Endothelial cell of umbilical vein (primary cell): ENCODE measurements at regions of chr1 and their contacts with region 1.

Region 1: DNA sequence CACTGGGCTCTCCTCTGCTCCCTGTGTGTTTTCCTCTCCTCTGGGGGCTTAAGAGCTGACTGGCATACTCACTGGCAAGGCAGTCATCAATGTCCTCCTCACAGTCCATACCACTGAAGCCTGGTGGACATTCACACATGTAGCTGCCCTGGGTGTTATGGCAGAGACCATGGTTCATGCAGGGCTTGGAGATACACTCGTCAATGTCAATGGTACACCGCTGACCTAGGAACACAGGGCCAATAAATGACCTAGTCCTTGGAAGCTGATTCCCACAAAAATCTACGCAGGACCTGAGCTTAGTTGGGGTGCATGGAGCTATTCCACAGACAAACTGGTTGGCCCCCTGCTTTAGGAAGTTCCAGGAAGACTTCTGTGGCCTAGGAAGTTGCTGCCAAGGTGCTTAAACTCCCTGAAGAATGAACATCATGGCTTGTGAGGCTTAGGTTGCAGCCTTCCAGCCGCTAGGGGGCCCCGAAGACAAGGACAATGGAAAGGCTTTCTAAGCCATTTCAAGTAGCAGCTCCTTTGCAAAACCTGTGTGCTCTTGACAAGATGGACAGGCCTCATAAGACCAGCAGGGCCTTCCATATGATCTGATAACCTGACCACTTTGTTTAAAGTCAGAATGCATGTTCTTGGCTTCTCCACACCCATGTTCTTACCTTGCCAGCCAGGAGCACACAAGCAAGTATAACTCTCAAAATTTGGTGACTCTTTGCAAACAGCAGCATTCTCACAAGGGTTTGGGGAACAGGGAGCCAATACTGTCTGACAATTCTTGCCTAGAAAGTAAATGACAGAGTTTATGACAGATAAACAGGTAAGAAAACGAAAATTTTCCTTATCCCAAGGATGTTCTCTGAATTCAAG is 52.3 kb upstream of the ADAM30 start:
- DNase-seq: peak; percentile 79
- H3K4me3 ChIP-seq: no peak overlapping the region
- H3K27ac ChIP-seq: no peak overlapping the region
- H3K4me1 ChIP-seq: no peaks in the 10 kb centered on the region
- H3K27me3 ChIP-seq: no peaks in the 10 kb centered on the region
- CTCF ChIP-seq: peak; percentile 89 to 90
- POLR2A ChIP-seq: no peak

Region 2: GRCh38 chr1:119870917-119871596 is 77.5 kb before region 1 on chr1:
- CTCF ChIA-PET with region 1: interaction called, 5 read pairs
- POLR2A ChIA-PET with region 1: no interaction called
- dilution Hi-C with region 1: no loop called
- intact Hi-C with region 1: loop called (anchors 1 kb)
- DNase-seq: peak; percentile 72
- H3K4me3 ChIP-seq: no peak overlapping the region
- H3K27ac ChIP-seq: no peak overlapping the region
- H3K4me1 ChIP-seq: no peaks in the 10 kb centered on the region
- H3K27me3 ChIP-seq: peaks cover under 1 to 6% of the 10 kb centered on the region in 2 experiments
- CTCF ChIP-seq: peak; percentile 92 to 94
- POLR2A ChIP-seq: no peak

Region 3: DNA sequence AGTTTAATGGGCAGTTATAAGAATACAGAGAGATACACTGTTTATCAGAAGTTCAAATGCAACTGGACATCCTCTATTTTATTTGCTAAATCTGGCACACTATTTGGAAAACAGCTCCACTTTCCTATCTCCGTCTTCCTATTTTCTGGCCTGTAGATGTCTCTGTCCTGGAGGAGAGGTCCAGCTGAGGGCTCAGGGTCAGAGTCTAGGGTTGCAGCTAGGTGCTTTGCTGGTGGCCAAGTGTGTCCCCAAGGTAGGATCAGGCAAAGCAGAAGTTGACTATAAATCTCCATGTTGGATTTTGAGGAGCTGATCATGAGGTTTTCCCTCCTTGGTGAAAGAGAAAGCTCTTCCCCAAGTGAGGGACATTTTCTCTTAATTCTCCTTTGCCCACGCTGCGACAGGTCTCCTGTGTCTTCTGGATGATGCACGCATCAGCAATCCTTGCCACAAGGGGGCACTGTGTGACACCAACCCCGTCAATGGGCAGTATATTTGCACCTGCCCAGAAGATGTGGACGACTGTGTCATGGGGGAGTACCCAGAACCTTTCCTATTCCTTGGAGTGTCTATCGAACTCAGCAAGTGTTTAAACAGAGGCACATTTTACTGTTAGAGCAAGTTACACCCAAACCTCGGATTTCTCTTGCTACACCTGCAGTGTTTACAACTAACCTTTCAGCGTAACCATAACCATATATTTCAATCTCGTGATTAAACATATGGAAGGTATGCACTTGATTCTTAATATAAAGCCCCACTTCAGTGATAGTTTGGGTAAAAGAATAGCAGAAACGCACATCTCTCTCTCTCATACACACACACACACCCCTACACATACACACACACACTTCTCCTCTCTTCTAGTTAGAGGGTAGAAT is 62.4 kb before region 1 on chr1:
- CTCF ChIA-PET with region 1: interaction called, 6 read pairs
- POLR2A ChIA-PET with region 1: no interaction called
- dilution Hi-C with region 1: no loop called
- intact Hi-C with region 1: loop called (anchors 5 kb)
- DNase-seq: peak; percentile 54
- H3K4me3 ChIP-seq: no peak overlapping the region
- H3K27ac ChIP-seq: no peak overlapping the region
- H3K4me1 ChIP-seq: no peaks in the 10 kb centered on the region
- H3K27me3 ChIP-seq: peaks cover 12 to 14% of the 10 kb centered on the region in 2 experiments
- CTCF ChIP-seq: peak; percentile 80 to 82
- POLR2A ChIP-seq: no peak

Region 4: GRCh38 chr1:119962296-119962968 is 13.9 kb after region 1 on chr1:
- CTCF ChIA-PET with region 1: interaction called, 30 read pairs
- POLR2A ChIA-PET with region 1: no interaction called
- dilution Hi-C with region 1: no loop called
- intact Hi-C with region 1: no loop called
- DNase-seq: no peak
- H3K4me3 ChIP-seq: no peak overlapping the region
- H3K27ac ChIP-seq: no peak overlapping the region
- H3K4me1 ChIP-seq: peaks cover 12% of the 10 kb centered on the region
- H3K27me3 ChIP-seq: no peaks in the 10 kb centered on the region
- CTCF ChIP-seq: no peak
- POLR2A ChIP-seq: no peak

Region 5: GRCh38 chr1:119968068-119968492 is 19.5 kb after region 1 on chr1:
- CTCF ChIA-PET with region 1: interaction called, 29 read pairs
- POLR2A ChIA-PET with region 1: no interaction called
- dilution Hi-C with region 1: no loop called
- intact Hi-C with region 1: no loop called
- DNase-seq: peak; percentile 50
- H3K4me3 ChIP-seq: no peak overlapping the region
- H3K27ac ChIP-seq: no peak overlapping the region
- H3K4me1 ChIP-seq: no peaks in the 10 kb centered on the region
- H3K27me3 ChIP-seq: no peaks in the 10 kb centered on the region
- CTCF ChIP-seq: peak; percentile 77 to 81
- POLR2A ChIP-seq: no peak